WTC11 (cell line): ENCODE measurements at regions of chr9 and their contacts with region 1.

Region 1: DNA sequence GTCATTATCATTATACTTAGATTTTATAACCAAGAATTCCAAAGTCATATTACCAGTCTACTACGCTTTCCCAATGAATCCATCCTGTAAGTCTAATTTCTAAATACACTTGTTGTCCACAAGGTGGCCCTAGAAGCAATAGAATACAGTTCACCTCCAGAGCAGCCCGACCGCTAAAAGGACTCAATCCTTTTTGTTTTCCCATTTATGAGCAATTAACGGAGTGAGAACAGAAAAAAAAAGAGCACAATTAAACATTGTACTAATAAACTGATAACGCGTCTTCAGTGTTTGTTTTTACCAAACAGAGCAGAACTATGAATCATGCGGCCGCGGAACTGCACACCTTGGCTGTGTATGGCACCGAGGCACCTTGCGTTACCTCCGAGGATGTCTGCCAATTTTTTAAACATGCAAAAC is 160.7 kb upstream of the DAPK1 start:
- DNase-seq: no peak
- ATAC-seq: peak; percentile 28; the same call in 1 of the 2 replicates
- H3K4me3 Mint-ChIP-seq: peak overlapping the region; percentile 83
- H3K27ac Mint-ChIP-seq: peak overlapping the region; percentile 94
- H3K4me1 Mint-ChIP-seq: peaks cover 42% of the 10 kb centered on the region
- H3K27me3 Mint-ChIP-seq: peaks cover 2% of the 10 kb centered on the region
- CTCF ChIP-seq: peak; percentile 59

Region 2: GRCh38 chr9:87425202-87425601 is 88.3 kb after region 1 on chr9:
- CTCF ChIA-PET with region 1: no interaction called
- POLR2A ChIA-PET with region 1: no interaction called
- DNase-seq: no peak
- ATAC-seq: no peak
- H3K4me3 Mint-ChIP-seq: no peak overlapping the region
- H3K27ac Mint-ChIP-seq: no peak overlapping the region
- H3K4me1 Mint-ChIP-seq: peaks cover 29% of the 10 kb centered on the region
- H3K27me3 Mint-ChIP-seq: peaks cover 13% of the 10 kb centered on the region
- CTCF ChIP-seq: no peak

Region 3: DNA sequence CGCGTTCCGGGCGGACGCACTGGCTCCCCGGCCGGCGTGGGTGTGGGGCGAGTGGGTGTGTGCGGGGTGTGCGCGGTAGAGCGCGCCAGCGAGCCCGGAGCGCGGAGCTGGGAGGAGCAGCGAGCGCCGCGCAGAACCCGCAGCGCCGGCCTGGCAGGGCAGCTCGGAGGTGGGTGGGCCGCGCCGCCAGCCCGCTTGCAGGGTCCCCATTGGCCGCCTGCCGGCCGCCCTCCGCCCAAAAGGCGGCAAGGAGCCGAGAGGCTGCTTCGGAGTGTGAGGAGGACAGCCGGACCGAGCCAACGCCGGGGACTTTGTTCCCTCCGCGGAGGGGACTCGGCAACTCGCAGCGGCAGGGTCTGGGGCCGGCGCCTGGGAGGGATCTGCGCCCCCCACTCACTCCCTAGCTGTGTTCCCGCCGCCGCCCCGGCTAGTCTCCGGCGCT is 160.7 kb after region 1 on chr9 and contains the start of gene DAPK1:
- CTCF ChIA-PET with region 1: interaction called, 39 read pairs
- POLR2A ChIA-PET with region 1: interaction called, 19 read pairs
- DNase-seq: peak; percentile 79
- ATAC-seq: peak; percentile 84
- H3K4me3 Mint-ChIP-seq: peak within 1 kb of the TSS; percentile 92
- H3K27ac Mint-ChIP-seq: peak within 1 kb of the TSS; percentile 69; the same call in 1 of the 2 replicates
- H3K4me1 Mint-ChIP-seq: peaks cover 39% of the 10 kb centered on the region
- H3K27me3 Mint-ChIP-seq: peaks cover 3% of the 10 kb centered on the region; the same call in 1 of the 2 replicates
- CTCF ChIP-seq: no peak
- total RNA-seq, gene DAPK1: 127 to 130 TPM (median 129 TPM) in 3 replicates

Region 4: DNA sequence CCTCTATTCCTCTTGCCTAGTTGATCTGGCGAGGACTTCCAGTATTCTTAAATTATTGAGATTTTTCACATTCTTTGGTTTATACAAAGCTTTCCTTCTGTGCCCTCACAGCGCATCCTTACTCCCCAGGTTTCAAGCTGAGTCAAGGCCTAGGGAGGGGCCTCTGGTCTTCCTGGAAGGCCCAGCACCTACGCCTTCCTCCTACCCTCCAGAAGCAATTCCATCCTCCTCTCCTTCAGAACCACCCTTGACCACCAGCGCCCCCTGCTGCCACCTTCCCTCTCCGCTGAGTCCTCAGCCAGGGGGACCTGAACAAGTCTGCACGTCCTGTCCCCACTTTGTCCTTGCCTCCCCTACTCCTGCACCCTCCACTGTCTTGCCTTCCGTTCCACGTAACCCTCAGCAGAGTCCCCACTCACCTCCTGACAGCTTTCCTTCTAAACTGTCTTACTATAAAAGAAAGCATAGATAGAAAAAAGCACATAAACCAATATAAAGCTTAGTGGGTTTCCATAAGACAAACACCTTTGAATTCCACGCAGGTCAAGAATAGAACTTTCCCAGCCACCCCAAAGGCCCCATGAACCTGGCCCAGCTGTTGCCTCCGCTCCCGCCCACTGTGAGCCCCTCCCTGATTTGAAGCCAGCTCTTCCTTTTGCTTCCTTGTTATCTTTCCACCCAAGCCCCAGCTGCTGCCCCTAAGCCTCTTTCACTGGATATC is 326.0 kb after region 1 on chr9:
- CTCF ChIA-PET with region 1: interaction called, 22 read pairs
- POLR2A ChIA-PET with region 1: no interaction called
- DNase-seq: peak; percentile 94
- ATAC-seq: peak; percentile 92
- H3K4me3 Mint-ChIP-seq: no peak overlapping the region
- H3K27ac Mint-ChIP-seq: peak overlapping the region; percentile 21; the same call in 1 of the 2 replicates
- H3K4me1 Mint-ChIP-seq: peaks cover 24% of the 10 kb centered on the region
- H3K27me3 Mint-ChIP-seq: no peaks in the 10 kb centered on the region
- CTCF ChIP-seq: peak; percentile 71